ENCODE measurements at regions of chr3 and their contacts with region 1.

Region 1: GRCh38 chr3:29285471-29286071 is 4.7 kb downstream of the RBMS3 start:
- DNase-seq: no peak
- ATAC-seq: peak; percentile 3
- H3K4me3 ChIP-seq: peak overlapping the region; percentile 53 to 83 (median 68)
- H3K27ac ChIP-seq: peak overlapping the region; percentile 83 to 90 (median 89)
- H3K4me1 ChIP-seq: peaks cover 33 to 49% of the 10 kb centered on the region in 2 donors
- H3K27me3 ChIP-seq: no peaks in the 10 kb centered on the region
- CTCF ChIP-seq: peak in 1 of 5 experiments; percentile 13
- POLR2A ChIP-seq: no peak

Region 2: DNA sequence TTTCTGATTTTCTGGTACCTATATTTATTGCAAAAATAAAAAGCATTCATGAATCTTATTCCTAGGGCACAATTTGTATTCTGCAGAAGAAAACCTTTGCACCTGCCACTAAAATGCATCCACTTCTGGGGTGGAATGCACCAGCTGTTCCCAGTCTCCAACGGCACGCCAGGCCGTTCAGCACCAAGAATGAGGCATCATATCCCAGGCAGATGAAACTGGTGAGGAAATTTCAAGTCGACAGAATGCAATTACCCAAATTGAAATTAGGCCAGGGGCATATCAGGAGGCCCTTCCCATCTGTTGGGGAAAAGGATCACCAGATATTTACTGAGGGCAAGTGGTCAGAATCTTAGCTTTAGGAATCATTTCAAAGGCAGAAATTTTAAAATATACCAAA is 18.3 kb before region 1 on chr3:
- in situ Hi-C with region 1: no loop called
- intact Hi-C with region 1: no loop called
- DNase-seq: no peak
- ATAC-seq: no peak
- H3K4me3 ChIP-seq: no peak overlapping the region
- H3K27ac ChIP-seq: no peak overlapping the region
- H3K4me1 ChIP-seq: peaks cover 0 to 4% of the 10 kb centered on the region in 2 donors
- H3K27me3 ChIP-seq: no peaks in the 10 kb centered on the region
- CTCF ChIP-seq: no peak
- POLR2A ChIP-seq: no peak

Region 3: GRCh38 chr3:29324180-29324651 is 38.6 kb after region 1 on chr3:
- in situ Hi-C with region 1: no loop called
- intact Hi-C with region 1: loop called (anchors 5 kb)
- DNase-seq: peak; percentile 38 to 69
- ATAC-seq: peak; percentile 88 to 94
- H3K4me3 ChIP-seq: peak overlapping the region; percentile 18 to 56 (median 34)
- H3K27ac ChIP-seq: peak overlapping the region; percentile 53 to 81 (median 71)
- H3K4me1 ChIP-seq: peaks cover 58 to 59% of the 10 kb centered on the region in 2 donors
- H3K27me3 ChIP-seq: no peaks in the 10 kb centered on the region
- CTCF ChIP-seq: no peak
- POLR2A ChIP-seq: no peak

Region 4: DNA sequence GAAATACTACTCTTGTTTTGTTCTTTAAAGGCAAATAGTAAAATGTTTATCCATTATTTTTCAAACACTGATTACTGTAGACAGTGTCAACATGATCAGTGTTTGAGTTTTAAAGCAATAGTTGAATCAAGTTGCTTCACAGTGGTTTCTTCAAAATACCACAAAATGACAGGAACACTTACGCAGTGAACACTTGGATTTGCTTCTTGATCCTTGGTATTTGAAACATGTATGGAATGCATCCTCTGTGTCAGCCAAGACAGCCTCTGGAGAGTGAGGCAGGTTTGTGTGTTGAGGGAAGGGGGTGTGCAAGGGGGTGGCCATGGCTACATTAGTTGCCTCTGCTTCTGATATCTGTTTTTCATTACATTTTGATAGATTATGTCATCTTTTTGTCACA is 408.3 kb after region 1 on chr3:
- in situ Hi-C with region 1: no loop called
- intact Hi-C with region 1: loop called (anchors 5 kb)
- DNase-seq: no peak
- ATAC-seq: peak in 1 of 2 donors; percentile 34
- H3K4me3 ChIP-seq: no peak overlapping the region
- H3K27ac ChIP-seq: peak overlapping the region; percentile 31 to 75 (median 62)
- H3K4me1 ChIP-seq: peaks cover 38 to 39% of the 10 kb centered on the region in 2 donors
- H3K27me3 ChIP-seq: no peaks in the 10 kb centered on the region
- CTCF ChIP-seq: no peak
- POLR2A ChIP-seq: no peak